Right ventricle myocardium superior (tissue), 1 donor: ENCODE measurements at regions of chr4 and their contacts with region 1.

Region 1: DNA sequence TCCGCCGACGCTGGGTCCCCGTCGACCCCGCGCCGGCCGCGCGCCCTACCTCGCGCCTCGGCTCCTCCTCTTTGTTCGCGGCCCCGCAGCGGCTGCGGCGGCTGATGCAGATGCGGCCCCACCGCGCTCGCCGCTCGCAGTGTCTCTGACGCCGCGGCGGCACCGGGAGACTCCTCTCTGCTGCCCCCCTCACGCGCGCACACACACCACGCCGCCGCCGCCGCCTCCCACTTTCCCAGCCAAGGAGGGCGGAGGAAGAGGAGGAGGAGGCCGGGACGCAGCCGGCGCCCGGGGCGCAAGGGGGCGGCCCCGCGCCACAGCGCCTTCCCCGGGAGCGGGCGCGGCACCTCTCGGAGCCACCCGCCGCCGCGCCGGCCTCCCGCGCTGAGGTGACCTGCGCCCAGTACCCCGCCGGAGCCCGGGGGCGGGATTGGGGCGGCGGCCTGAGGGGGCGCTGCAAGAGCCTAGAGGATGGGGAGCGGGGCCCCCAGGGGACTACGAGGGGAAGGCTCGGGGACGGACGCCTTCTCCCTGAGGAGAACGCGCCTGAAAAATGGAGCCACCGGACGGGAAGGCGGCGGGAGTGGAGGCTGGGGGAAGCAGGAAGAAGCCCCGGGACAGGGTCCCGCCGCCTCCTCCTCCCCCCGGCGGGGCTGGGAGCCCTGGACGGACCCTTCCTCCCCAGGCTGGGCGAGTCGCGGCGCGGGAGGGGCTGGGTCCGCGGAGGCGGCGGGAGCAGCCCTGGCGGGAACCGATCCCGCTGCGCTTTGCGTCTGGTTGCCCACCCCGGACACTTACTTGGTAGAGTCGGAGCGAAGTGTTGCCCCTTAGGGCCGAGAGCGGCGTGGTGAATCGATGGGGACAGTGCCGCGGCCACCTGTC is at the start of gene SH3RF1:
- DNase-seq: peak; percentile 94
- ATAC-seq: peak; percentile 97
- total RNA-seq, gene SH3RF1: 8.3 TPM

Region 2: GRCh38 chr4:168685136-168685809 is 585.8 kb before region 1 on chr4:
- intact Hi-C with region 1: no loop called
- DNase-seq: no peak
- ATAC-seq: no peak

Region 3: GRCh38 chr4:169015186-169015623 is 255.8 kb before region 1 on chr4:
- intact Hi-C with region 1: no loop called
- DNase-seq: peak; percentile 73
- ATAC-seq: peak; percentile 39

Region 4: DNA sequence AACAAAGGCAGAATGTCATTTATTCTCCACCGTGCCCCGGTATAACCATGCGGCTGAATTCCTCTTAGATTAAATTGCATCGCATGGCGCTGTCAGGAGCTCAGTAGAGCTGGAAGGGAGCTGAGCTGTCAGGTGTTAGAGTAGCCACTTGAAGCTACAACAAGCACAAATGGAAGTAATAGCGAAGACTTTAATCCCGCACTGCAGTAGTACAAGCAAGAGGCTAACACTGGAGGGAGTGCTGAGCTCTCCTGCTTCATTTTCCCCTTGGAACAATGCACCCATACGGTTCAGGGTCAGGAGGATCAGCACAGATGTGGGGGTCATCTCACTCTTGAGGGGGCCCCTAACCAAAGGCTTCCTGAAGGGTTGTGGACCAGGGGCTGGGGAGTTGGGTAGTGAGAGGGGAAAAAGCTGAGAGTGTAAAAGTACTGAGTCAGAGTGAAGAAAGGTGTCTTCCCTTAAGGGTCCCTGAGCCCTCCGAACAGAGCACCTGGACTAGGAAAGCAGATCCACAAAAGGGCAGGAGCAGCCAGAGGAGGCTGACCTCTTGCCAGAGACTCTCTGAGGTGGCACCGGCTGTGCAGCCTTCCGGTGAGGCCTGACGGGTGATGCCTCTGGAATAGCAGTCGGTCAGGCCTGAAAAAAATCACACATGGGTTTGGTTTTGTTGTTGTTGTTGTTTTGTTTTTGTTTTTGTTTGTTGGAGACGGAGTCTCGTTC is 225.0 kb before region 1 on chr4:
- intact Hi-C with region 1: loop called (anchors 10 kb)
- DNase-seq: no peak
- ATAC-seq: peak; percentile 28